ENCODE measurements at regions of chr16 and their contacts with region 1.

Region 1: GRCh38 chr16:29790183-29790952 is at the start of gene KIF22:
- DNase-seq: peak; percentile 100
- H3K4me3 ChIP-seq: peak within 1 kb of the TSS; percentile 67 to 92 (median 80)
- H3K27ac ChIP-seq: peak within 1 kb of the TSS; percentile 90 to 95 (median 92)
- H3K4me1 ChIP-seq: peaks cover 11 to 27% (median 20%) of the 10 kb centered on the region in 4 donors
- H3K27me3 ChIP-seq: no peaks in the 10 kb centered on the region
- CTCF ChIP-seq: peak; percentile 67 to 94 (median 78)
- EP300 ChIP-seq: no peak
- POLR2A ChIP-seq: peak; percentile 77
- total RNA-seq, gene KIF22: 37.6 to 159 (median 59.5) TPM

Region 2: GRCh38 chr16:29815793-29816693 is 25.7 kb after region 1 on chr16 and contains the start of gene PAGR1:
- in situ Hi-C with region 1: no loop called
- intact Hi-C with region 1: loop called (anchors 1 kb)
- DNase-seq: peak; percentile 99
- H3K4me3 ChIP-seq: peak within 1 kb of the TSS; percentile 58 to 79 (median 70)
- H3K27ac ChIP-seq: peak within 1 kb of the TSS; percentile 93 to 98 (median 96)
- H3K4me1 ChIP-seq: peaks cover 40 to 79% (median 72%) of the 10 kb centered on the region in 4 donors
- H3K27me3 ChIP-seq: no peaks in the 10 kb centered on the region
- CTCF ChIP-seq: peak; percentile 80 to 95 (median 92)
- EP300 ChIP-seq: no peak
- POLR2A ChIP-seq: peak; percentile 81
- total RNA-seq, gene PAGR1: 28.8 to 47.5 (median 32.3) TPM

Measured in transverse colon (tissue), 4 donors.